Mammary epithelial cell (primary cell): ENCODE measurements at regions of chr6 and their contacts with region 1.

Region 1: DNA sequence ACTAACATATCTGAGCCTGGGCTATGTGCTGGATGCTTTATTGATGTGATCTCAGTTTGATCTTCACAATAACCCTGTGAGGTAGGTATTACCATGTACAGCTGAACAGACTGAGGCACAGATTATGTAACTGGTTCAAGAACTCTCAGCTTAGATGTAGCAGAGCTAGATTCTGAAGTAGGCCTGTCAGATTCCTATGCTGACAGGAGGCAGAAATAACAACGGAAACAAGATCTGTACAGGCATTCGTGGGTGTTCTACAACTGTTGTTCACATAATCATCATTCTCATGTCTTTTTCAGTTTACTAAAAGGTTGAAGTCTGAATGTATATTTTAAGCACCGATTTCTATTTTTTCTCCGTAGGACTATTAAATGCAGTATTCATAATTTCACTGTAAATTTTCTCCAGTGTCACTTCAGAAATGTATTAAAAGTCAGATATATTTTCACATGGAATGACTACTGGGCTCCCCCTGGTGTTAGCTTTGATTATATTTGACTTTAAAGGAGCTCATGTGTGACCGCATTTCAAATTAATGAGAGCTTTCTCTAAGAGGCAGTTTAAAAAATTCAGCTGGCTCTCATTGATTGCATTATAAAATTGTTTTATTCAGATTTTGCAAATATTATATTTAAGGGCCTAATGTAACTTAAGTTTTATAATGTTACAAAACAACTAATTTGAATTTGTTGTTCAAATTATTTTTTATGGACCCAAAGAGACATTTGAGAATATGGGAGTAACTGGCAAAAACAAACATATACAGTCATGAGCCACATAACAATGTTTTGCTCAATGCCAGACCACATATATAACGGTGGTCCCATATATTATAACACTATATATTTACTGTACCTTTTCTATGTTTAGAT is 36.4 kb upstream of the SLC17A4 start:
- DNase-seq: no peak
- H3K4me3 ChIP-seq: no peak overlapping the region
- H3K27ac ChIP-seq: no peak overlapping the region
- H3K4me1 ChIP-seq: no peaks in the 10 kb centered on the region
- H3K27me3 ChIP-seq: no peaks in the 10 kb centered on the region
- CTCF ChIP-seq: peak; percentile 47 to 57

Region 2: DNA sequence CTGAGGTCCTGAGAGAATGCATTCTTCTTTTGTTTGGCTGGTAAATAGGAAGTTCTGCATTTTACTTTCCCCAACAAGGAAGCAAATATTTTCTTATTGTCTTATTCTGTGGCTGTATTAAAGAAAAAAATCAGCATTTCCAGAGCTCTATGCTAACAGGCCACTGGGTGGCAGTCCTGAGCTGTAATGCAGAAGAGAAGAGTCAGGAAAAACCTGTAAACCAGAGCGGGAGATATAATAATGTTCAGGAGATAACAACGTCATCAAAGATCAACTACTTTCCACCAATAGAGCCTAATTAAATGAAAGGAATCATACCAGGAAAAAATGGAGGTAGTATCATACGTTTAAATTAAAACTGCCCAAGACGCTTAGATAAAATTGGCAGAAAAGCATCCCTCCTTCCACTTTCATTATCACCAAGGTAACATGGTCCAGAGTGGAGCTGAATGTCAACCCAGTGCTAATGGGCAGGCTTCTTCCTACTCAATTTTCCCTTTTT is 494.6 kb before region 1 on chr6:
- CTCF ChIA-PET with region 1: interaction called, 3 read pairs
- dilution Hi-C with region 1: no loop called
- in situ Hi-C with region 1: no loop called
- intact Hi-C with region 1: loop called (anchors 2 kb)
- DNase-seq: peak; percentile 52
- H3K4me3 ChIP-seq: peak overlapping the region in 2 of 3 experiments; percentile 3
- H3K27ac ChIP-seq: no peak overlapping the region
- H3K4me1 ChIP-seq: peaks cover 20% of the 10 kb centered on the region
- H3K27me3 ChIP-seq: no peaks in the 10 kb centered on the region
- CTCF ChIP-seq: peak; percentile 84 to 92

Region 3: GRCh38 chr6:25263657-25264056 is 454.4 kb before region 1 on chr6:
- CTCF ChIA-PET with region 1: no interaction called
- dilution Hi-C with region 1: no loop called
- in situ Hi-C with region 1: no loop called
- intact Hi-C with region 1: loop called (anchors 10 kb)
- DNase-seq: peak; percentile 68
- H3K4me3 ChIP-seq: no peak overlapping the region
- H3K27ac ChIP-seq: no peak overlapping the region
- H3K4me1 ChIP-seq: no peaks in the 10 kb centered on the region
- H3K27me3 ChIP-seq: no peaks in the 10 kb centered on the region
- CTCF ChIP-seq: no peak

Region 4: DNA sequence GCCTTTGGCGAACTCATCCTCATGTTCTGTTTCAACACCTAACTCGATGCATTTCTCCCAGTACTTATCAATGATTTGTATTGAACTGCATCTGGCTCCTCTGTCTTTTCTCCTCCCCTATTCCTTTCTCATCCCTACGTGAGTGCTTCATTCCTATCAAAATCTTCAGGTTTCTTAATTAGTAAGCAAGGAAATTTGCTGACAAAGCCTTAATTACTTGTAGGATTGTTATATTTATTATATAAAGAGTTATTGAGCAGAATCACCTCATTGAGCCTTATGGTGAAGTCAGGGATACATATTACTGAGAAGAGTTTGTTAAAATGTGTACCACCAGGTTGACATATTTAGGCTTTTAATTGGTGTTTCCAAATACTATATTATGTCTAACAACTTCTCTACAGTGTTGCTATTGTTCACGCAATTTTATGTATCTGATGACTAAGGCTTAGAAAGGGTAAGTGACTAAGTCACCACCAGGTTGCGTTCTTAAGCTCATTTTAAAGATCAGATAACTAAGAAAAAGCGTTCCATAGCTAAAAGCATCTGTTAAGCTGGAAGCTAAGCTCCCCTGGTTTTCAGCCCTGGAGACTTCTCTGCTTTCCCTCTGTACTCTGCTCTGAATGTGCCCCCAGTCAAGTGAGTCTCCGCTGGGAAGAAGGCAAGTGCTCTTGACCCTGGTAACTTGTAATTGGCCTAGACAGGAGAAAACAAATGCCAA is 47.1 kb before region 1 on chr6:
- CTCF ChIA-PET with region 1: interaction called, 6 read pairs
- dilution Hi-C with region 1: no loop called
- in situ Hi-C with region 1: no loop called
- intact Hi-C with region 1: loop called (anchors 5 kb)
- DNase-seq: peak; percentile 54
- H3K4me3 ChIP-seq: no peak overlapping the region
- H3K27ac ChIP-seq: no peak overlapping the region
- H3K4me1 ChIP-seq: peaks cover 3% of the 10 kb centered on the region
- H3K27me3 ChIP-seq: no peaks in the 10 kb centered on the region
- CTCF ChIP-seq: peak in 1 of 2 donors; percentile 29

Region 5: DNA sequence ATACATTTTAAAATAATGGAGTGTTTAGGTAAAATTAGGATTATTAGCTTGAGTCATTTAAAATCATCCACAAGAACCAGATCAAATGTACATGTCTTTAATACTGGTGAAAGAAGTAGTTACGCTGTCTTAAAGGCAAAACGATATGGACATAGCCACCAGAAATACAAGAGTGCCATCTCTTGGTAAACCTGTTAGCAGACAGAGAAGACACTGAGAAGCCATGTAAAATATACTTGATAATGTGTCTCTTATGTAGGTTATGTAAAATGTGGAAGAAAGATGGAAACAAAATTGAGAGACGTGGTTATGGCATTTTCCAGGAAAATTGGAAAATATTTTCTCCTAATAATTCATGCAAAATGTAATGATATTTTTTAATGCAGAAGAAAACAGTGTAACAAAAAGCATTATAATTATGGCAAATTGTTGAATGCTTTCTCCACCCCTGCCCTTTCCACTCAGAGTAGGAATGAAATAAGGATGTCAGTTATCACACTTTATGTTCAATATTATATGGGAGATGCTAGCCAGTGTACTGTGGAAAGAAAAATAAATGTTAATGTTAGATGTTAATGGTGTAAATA is 224.6 kb after region 1 on chr6:
- CTCF ChIA-PET with region 1: interaction called, 3 read pairs
- dilution Hi-C with region 1: no loop called
- in situ Hi-C with region 1: no loop called
- intact Hi-C with region 1: loop called (anchors 1 kb)
- DNase-seq: peak; percentile 35
- H3K4me3 ChIP-seq: no peak overlapping the region
- H3K27ac ChIP-seq: no peak overlapping the region
- H3K4me1 ChIP-seq: no peaks in the 10 kb centered on the region
- H3K27me3 ChIP-seq: no peaks in the 10 kb centered on the region
- CTCF ChIP-seq: peak; percentile 47 to 55